ENCODE measurements at regions of chr15 and their contacts with region 1.

Region 1: GRCh38 chr15:51401872-51402517 is 60.5 kb downstream of the GLDN start:
- DNase-seq: peak; percentile 56
- H3K4me3 ChIP-seq: no peak overlapping the region
- H3K27ac ChIP-seq: no peak overlapping the region
- H3K4me1 ChIP-seq: no peaks in the 10 kb centered on the region
- H3K27me3 ChIP-seq: peaks cover 3% of the 10 kb centered on the region
- CTCF ChIP-seq: peak; percentile 86

Region 2: DNA sequence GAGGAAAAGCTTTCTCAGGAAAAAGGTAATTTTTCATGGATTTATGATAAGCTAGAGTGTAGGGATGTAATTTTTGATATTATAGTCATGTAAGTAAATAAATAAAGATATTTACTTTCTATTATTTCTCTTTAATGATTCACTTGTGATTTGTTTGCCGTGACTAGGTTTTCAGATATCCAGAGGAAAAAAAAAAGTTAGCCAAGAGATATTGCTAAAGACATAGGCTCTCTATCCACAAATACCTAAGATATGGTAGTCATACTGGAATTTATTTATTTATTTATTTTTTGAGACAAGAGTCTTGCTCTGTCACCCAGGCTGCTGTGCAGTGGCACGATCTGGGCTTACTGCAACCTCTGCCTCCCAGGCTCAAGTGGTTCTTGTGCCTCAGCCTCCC is 433.6 kb before region 1 on chr15:
- CTCF ChIA-PET with region 1: no interaction called
- POLR2A ChIA-PET with region 1: no interaction called
- intact Hi-C with region 1: no loop called
- DNase-seq: no peak
- H3K4me3 ChIP-seq: no peak overlapping the region
- H3K27ac ChIP-seq: no peak overlapping the region
- H3K4me1 ChIP-seq: no peaks in the 10 kb centered on the region
- H3K27me3 ChIP-seq: no peaks in the 10 kb centered on the region
- CTCF ChIP-seq: no peak

Region 3: DNA sequence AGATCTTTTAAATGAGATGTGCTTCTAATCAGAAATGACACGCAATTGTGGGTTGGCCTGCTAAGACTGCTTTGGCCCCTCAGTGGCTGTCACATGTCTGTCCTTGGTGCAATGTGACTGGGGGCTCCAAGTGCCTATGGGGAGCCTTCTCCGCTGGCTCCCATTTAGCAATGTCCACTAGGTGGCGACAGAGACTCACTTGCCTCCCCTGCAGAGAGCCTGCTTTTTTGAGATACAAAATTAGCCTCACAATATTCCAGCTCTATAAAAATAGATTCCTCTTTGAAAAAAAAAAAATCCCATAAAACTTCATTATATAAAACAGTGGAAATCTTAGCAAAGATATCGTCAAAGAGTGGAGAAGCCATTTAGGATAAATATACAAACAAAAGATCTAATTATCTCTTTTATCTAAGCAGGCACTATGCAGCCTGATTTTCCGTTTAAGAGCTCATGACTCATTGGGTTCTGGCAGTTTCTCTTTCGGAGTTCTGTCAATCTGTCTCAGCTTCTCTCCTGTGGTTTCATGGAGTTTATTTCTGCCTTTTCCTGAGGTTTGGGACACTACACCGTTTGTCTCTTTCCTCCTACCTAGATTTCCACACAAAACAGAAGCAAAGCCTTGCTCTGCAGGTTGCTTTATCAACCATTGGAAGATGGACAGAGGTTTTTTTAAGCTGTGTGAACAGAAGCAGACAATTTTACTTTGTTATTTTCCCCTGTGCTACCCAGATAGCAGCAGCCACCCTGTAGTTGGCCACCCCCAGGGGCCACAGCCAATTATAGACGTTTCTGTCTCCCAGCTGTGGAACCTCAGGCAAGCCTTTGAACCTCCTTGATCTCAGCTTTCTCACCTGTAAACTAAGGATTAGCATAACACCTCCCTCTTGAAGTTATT is 238.9 kb before region 1 on chr15:
- CTCF ChIA-PET with region 1: interaction called, 21 read pairs
- POLR2A ChIA-PET with region 1: no interaction called
- intact Hi-C with region 1: loop called (anchors 5 kb)
- DNase-seq: peak; percentile 78
- H3K4me3 ChIP-seq: peak overlapping the region; percentile 7
- H3K27ac ChIP-seq: no peak overlapping the region
- H3K4me1 ChIP-seq: peaks cover 5% of the 10 kb centered on the region
- H3K27me3 ChIP-seq: peaks cover 11% of the 10 kb centered on the region
- CTCF ChIP-seq: peak; percentile 95

Region 4: GRCh38 chr15:51227940-51228783 is 173.8 kb before region 1 on chr15:
- CTCF ChIA-PET with region 1: interaction called, 6 read pairs
- POLR2A ChIA-PET with region 1: no interaction called
- intact Hi-C with region 1: loop called (anchors 5 kb)
- DNase-seq: peak; percentile 84
- H3K4me3 ChIP-seq: no peak overlapping the region
- H3K27ac ChIP-seq: no peak overlapping the region
- H3K4me1 ChIP-seq: peaks cover 10% of the 10 kb centered on the region
- H3K27me3 ChIP-seq: no peaks in the 10 kb centered on the region
- CTCF ChIP-seq: no peak

Region 5: DNA sequence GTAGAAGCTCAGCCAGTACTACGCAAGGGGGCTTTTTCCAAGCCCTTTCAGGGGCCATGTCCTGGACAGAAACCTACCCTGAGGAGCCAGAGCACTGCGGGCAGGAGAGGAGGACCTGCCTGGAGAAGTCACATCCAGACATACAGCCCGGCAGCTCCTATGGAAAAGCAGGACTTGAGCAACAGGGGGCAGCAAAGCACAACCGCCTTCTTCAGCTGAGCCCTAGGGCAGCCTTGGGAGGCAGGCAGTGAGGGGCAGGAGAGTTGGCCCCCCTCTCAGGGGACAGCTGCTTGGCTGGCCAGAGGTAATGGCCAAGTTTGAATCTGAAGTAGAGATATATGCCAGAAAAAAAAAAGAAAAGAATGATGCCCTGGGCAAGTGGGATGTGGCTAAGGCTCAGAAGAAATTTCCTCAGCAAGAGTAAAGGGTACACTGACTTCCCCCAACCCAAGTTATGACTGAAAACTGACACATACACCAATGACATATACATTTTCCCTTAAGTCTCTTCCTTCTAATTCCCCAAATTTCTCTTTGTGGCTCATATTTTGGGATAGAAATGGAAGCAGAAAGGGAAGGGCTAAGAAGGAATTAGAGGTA is 120.5 kb before region 1 on chr15:
- CTCF ChIA-PET with region 1: interaction called, 10 read pairs
- POLR2A ChIA-PET with region 1: no interaction called
- intact Hi-C with region 1: loop called (anchors 5 kb)
- DNase-seq: peak; percentile 64
- H3K4me3 ChIP-seq: no peak overlapping the region
- H3K27ac ChIP-seq: no peak overlapping the region
- H3K4me1 ChIP-seq: no peaks in the 10 kb centered on the region
- H3K27me3 ChIP-seq: peaks cover 30% of the 10 kb centered on the region
- CTCF ChIP-seq: peak; percentile 80

Region 6: GRCh38 chr15:51460796-51461195 is 58.8 kb after region 1 on chr15:
- CTCF ChIA-PET with region 1: no interaction called
- POLR2A ChIA-PET with region 1: no interaction called
- intact Hi-C with region 1: no loop called
- DNase-seq: no peak
- H3K4me3 ChIP-seq: no peak overlapping the region
- H3K27ac ChIP-seq: no peak overlapping the region
- H3K4me1 ChIP-seq: no peaks in the 10 kb centered on the region
- H3K27me3 ChIP-seq: no peaks in the 10 kb centered on the region
- CTCF ChIP-seq: no peak

Region 7: DNA sequence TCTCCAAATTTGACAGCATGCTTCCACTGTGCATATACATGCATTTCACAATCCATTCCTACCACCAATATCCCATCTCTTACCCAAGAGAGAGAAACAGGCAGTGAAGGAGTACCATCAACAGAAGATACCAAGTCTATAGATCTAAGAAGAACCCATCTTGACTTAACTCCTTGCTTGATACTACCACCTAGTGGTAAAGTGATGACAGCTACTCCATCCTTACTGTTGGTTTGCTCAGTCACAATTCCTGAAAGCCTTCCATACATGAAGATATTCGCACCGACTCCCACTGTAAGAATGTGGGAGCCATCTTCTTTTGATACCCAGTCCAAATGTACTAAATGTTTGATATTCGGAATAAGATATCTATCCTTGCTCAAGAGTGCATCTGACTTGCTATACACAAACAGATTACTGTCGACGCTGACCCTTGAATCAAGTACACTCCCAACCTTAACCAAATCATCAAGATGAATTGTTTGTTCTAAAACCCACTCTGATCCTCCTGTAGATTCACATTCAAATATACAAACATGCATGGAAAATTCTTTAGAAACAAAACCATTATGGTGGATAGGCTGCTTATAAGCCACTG is 97.5 kb after region 1 on chr15:
- CTCF ChIA-PET with region 1: interaction called, 4 read pairs
- POLR2A ChIA-PET with region 1: no interaction called
- intact Hi-C with region 1: loop called (anchors 1 kb)
- DNase-seq: peak; percentile 70
- H3K4me3 ChIP-seq: no peak overlapping the region
- H3K27ac ChIP-seq: no peak overlapping the region
- H3K4me1 ChIP-seq: no peaks in the 10 kb centered on the region
- H3K27me3 ChIP-seq: no peaks in the 10 kb centered on the region
- CTCF ChIP-seq: peak; percentile 77

Region 8: DNA sequence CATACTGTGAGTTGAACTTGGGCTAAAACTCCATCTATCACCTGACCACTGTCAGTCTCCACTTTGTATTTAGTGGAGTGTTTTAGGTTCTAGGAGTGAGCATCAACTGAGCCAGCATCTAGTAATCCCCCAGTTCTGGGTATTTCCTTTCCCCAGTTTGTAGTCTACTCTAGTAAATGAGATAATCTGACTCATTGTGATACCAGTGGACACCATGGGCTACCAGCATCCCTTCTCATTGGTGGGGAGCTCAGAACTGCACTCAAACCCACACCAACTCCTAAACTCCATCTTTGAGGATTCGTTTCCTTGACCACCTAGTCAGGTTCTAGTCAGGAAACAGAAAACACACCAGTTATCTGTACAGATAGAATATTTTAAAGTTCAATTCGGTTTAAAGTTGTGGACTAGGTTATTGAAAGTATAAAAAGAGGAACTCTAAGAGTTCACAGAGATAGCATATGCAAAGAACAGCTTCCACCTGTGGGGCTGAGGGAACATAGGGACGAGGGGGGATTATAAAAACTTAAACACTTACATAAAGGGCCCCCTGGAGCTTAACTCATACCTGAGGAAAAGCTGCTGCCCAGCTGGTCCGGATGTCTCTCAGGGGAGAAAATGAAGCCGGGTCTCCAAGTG is 533.6 kb after region 1 on chr15:
- CTCF ChIA-PET with region 1: no interaction called
- POLR2A ChIA-PET with region 1: no interaction called
- intact Hi-C with region 1: no loop called
- DNase-seq: no peak
- H3K4me3 ChIP-seq: no peak overlapping the region
- H3K27ac ChIP-seq: no peak overlapping the region
- H3K4me1 ChIP-seq: no peaks in the 10 kb centered on the region
- H3K27me3 ChIP-seq: no peaks in the 10 kb centered on the region
- CTCF ChIP-seq: no peak

Measured in A673 (cell line).